Thyroid gland (tissue), 4 donors: ENCODE measurements at regions of chr2 and their contacts with region 1.

Region 1: GRCh38 chr2:178280244-178280852 is 86.0 kb downstream of the OSBPL6 start:
- DNase-seq: peak; percentile 20 to 21
- H3K4me3 ChIP-seq: no peak overlapping the region
- H3K27ac ChIP-seq: no peak overlapping the region
- H3K4me1 ChIP-seq: no peaks in the 10 kb centered on the region
- H3K27me3 ChIP-seq: no peaks in the 10 kb centered on the region
- CTCF ChIP-seq: peak; percentile 68 to 87 (median 82)
- POLR2A ChIP-seq: no peak

Region 2: GRCh38 chr2:178128836-178129630 is 151.3 kb before region 1 on chr2:
- intact Hi-C with region 1: loop called (anchors 5 kb)
- DNase-seq: no peak
- H3K4me3 ChIP-seq: no peak overlapping the region
- H3K27ac ChIP-seq: no peak overlapping the region
- H3K4me1 ChIP-seq: peaks cover 5 to 6% of the 10 kb centered on the region in 2 donors
- H3K27me3 ChIP-seq: no peaks in the 10 kb centered on the region
- CTCF ChIP-seq: no peak
- POLR2A ChIP-seq: no peak